ENCODE measurements at regions of chr14 and their contacts with region 1.

Region 1: GRCh38 chr14:24259252-24259995 is 3.6 kb downstream of the TGM1 start:
- DNase-seq: no peak
- ATAC-seq: no peak

Region 2: GRCh38 chr14:24195191-24196070 is 64.0 kb before region 1 on chr14 and contains the start of gene TM9SF1:
- intact Hi-C with region 1: no loop called
- DNase-seq: peak; percentile 94
- ATAC-seq: peak; percentile 98
- total RNA-seq, gene TM9SF1: 19.2 TPM

Region 3: GRCh38 chr14:24289649-24290249 is 30.3 kb after region 1 on chr14:
- intact Hi-C with region 1: loop called (anchors 5 kb)
- DNase-seq: no peak
- ATAC-seq: no peak

Region 4: DNA sequence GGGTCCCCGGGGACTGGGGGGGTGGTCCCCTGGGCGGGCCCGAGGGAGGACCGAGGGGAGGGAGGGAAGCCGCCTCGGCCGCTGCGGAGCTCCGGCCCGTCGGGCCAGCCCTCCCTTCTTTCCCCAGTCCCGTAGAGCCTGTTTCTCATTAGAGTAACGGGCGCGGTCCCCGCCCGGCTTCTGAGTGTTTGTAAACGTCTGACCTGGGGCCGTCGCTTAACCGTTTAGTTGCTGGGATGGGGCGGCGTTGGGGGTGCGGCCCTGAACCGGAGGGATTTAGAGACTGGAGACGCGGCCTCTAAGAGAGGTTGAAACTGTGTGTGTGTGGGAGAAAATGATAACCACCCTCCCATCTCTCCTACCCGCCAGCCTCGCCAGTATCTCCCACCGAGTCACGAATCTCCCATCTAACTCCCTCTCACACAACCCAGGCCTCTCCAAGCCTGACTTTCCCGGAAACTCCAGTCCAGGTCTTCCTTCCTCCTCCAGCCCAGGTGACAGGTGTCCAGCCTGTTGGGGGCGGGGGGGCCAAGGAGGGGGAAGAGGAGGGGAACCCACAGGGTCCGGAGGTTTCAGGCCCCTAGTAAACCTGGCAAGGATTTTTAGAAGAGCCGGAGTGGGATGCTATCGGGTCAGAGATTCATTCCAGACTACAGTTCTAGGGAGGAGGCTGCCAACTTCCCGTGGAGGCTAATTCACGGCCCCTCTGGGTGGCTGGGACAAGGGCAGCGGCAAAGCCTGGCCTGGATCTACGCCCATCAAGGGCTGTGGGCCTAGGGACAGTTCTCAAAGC is 107.5 kb after region 1 on chr14:
- intact Hi-C with region 1: no loop called
- DNase-seq: peak; percentile 91
- ATAC-seq: peak; percentile 85

Region 5: DNA sequence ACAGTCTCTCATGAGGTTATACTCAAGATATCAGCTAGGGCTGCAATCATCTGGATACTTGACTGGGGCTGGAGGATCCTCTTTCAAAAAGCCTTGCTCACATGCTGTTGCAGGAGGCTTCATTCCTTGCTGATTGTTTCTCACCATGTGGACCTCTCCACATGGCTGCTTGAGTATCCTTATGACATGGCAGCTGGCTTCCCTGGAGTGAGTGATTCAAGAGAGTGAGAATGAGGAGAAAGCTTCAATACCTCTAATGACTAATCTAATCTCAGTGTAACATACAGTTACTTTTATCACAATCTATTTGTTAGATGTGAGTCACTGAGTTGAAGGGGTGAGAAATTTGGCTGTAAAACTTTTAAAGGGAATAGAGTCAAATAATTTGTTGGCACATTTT is 197.6 kb after region 1 on chr14:
- intact Hi-C with region 1: no loop called
- DNase-seq: no peak
- ATAC-seq: no peak

Measured in Right ventricle myocardium superior (tissue), 1 donor.